Common myeloid progenitor, CD34-positive (primary cell): ENCODE measurements at regions of chr11 and their contacts with region 1.

Region 1: GRCh38 chr11:67401495-67402191 is at the start of gene PPP1CA:
- DNase-seq: peak; percentile 84 to 91 (median 89)
- H3K4me3 ChIP-seq: peak within 1 kb of the TSS; percentile 64 to 89 (median 82)
- H3K27ac ChIP-seq: peak within 1 kb of the TSS; percentile 54 to 83
- H3K4me1 ChIP-seq: peaks cover 7 to 90% (median 80%) of the 10 kb centered on the region in 4 experiments
- H3K27me3 ChIP-seq: no peaks in the 10 kb centered on the region

Region 2: DNA sequence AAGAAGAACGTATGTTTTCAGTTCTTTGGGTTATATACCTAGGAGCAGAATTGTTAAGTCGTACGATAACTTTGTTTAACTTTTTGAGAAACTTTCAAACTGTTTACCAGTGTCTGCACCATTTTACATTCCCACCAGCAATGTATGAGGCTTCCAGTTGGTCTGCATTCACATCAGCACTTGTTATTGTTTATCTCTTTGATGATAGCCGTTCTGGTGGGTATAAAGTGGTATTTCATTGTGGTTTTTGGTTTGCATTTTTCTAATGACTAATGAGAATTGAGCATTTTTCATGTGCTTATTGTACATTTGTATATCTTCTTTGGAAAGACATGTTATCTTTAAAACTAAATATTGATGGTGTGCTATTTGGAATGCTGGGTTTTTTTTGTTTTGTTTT is 222.8 kb before region 1 on chr11:
- CTCF ChIA-PET with region 1: no interaction called
- POLR2A ChIA-PET with region 1: no interaction called
- DNase-seq: no peak
- H3K4me3 ChIP-seq: no peak overlapping the region
- H3K27ac ChIP-seq: no peak overlapping the region
- H3K4me1 ChIP-seq: no peaks in the 10 kb centered on the region
- H3K27me3 ChIP-seq: no peaks in the 10 kb centered on the region

Region 3: DNA sequence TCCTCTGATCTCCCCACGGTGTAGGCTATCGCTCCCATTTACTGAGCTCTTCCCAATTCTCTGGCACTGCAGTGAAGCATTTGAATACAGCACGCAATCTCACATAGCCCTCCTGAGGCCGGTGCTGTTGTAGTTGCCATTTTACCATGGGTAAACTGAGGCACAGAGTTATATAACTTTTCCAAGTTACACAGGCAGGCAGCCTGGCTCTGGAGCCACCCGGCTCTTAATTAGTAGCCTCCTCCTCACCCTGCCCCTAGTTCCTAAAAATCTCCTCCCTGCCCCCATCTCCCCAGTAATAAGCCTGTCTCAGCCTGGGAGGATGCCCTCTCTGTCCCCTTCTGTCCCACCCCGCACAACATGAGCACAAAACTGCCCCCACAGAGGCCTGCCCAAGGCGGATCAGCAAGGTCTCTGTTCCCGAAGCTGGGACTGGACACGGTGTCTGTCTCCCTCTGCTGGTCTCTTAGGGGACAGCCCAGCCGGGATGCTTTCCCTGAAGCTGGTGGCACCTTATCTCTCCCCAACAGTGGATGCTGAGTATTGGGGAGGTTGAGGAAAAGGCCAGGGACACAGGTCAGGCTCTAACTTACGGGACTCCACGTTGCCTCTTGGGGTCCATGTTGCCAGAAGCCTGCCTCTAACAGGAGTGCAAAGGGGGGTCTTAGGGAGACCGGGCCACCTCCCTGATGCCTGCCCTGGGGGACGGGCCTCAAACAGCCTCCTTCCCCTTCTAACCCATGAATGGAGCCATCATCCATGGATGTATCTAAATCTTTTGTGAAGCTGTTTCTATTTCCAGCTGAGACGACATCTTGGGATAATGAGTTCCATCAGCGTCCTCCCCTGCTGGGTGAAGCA is 19.1 kb before region 1 on chr11:
- CTCF ChIA-PET with region 1: interaction called, 11 read pairs
- POLR2A ChIA-PET with region 1: no interaction called
- DNase-seq: peak; percentile 70 to 82 (median 73)
- H3K4me3 ChIP-seq: no peak overlapping the region
- H3K27ac ChIP-seq: no peak overlapping the region
- H3K4me1 ChIP-seq: peaks cover 0 to 46% (median 29%) of the 10 kb centered on the region in 4 experiments
- H3K27me3 ChIP-seq: no peaks in the 10 kb centered on the region

Region 4: GRCh38 chr11:67420646-67421420 is 19.2 kb after region 1 on chr11:
- CTCF ChIA-PET with region 1: interaction called, 60 read pairs
- POLR2A ChIA-PET with region 1: interaction called, 9 read pairs
- DNase-seq: peak; percentile 93 to 97 (median 96)
- H3K4me3 ChIP-seq: peak overlapping the region in 6 of 7 experiments; percentile 28 to 73 (median 64)
- H3K27ac ChIP-seq: peak overlapping the region in 1 of 2 experiments; percentile 5
- H3K4me1 ChIP-seq: peaks cover 0 to 75% (median 53%) of the 10 kb centered on the region in 4 experiments
- H3K27me3 ChIP-seq: no peaks in the 10 kb centered on the region

Region 5: GRCh38 chr11:67436459-67437081 is 34.9 kb after region 1 on chr11:
- CTCF ChIA-PET with region 1: interaction called, 18 read pairs
- POLR2A ChIA-PET with region 1: interaction called, 7 read pairs
- DNase-seq: peak in 1 of 3 donors; percentile 45
- H3K4me3 ChIP-seq: peak overlapping the region in 6 of 7 experiments; percentile 15 to 89 (median 78)
- H3K27ac ChIP-seq: peak overlapping the region; percentile 25 to 70
- H3K4me1 ChIP-seq: peaks cover 1 to 82% (median 75%) of the 10 kb centered on the region in 4 experiments
- H3K27me3 ChIP-seq: no peaks in the 10 kb centered on the region

Region 6: DNA sequence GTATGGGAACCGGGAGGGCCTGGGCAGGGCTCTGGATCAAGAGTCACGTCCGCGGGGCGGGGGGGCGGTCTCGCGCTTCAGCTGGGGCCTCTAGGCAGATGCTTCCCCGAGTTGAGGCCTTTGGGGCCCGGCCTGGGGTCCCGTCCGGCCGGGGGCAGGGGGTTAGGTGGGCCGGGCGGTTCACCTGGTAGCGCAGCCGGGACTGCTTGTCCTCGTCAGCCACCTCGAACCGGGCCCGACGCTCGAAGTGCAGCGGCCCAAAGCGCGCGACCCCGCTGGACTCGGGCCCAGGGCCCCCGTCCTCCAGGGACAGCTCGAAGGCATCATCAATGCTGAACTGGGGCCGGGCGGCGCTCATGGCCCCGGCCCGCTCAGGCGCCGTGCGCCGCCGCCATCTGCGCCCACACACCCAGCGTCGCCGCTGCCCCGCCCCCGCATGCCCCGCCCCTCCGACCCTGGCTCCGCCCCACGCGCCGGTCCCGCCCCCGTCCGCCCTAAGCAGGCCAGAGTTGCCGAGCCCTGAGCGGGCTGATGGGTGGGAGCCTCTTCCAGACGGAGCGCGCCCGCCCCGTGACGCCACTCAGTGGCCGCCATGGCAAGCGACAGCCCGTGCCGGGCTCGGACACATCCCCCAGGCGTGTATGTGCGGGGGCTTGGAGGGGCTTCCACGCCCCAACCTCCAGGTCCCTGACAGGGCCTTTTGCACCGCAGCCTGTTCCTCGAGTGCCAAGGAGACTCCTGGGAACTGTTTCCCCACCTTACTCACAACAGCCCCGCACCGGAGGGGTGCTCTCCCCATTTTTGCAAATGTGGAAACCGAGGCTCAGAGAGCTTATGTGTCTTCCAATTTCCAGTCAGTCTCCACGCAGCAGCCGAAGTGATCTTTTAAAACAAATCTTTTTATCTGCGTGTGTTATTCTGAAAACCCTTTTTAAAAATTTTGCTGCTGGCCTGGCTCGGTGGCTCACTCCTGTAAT is 67.5 kb after region 1 on chr11 and contains the start of gene TMEM134:
- CTCF ChIA-PET with region 1: interaction called, 30 read pairs
- POLR2A ChIA-PET with region 1: interaction called, 3 read pairs
- DNase-seq: peak; percentile 93 to 95 (median 94)
- H3K4me3 ChIP-seq: peak within 1 kb of the TSS; percentile 59 to 88 (median 80)
- H3K27ac ChIP-seq: peak within 1 kb of the TSS; percentile 33 to 68
- H3K4me1 ChIP-seq: peaks cover 3 to 40% (median 27%) of the 10 kb centered on the region in 4 experiments
- H3K27me3 ChIP-seq: no peaks in the 10 kb centered on the region